Activated CD4-positive, alpha-beta T cell treated with anti-CD3 and anti-CD28 coated beads, Interleukin-2, amount 10 ng/mL, durations not matched to agents 24 days and 14 days (primary cell): ENCODE measurements at regions of chr6 and their contacts with region 1.

Region 1: DNA sequence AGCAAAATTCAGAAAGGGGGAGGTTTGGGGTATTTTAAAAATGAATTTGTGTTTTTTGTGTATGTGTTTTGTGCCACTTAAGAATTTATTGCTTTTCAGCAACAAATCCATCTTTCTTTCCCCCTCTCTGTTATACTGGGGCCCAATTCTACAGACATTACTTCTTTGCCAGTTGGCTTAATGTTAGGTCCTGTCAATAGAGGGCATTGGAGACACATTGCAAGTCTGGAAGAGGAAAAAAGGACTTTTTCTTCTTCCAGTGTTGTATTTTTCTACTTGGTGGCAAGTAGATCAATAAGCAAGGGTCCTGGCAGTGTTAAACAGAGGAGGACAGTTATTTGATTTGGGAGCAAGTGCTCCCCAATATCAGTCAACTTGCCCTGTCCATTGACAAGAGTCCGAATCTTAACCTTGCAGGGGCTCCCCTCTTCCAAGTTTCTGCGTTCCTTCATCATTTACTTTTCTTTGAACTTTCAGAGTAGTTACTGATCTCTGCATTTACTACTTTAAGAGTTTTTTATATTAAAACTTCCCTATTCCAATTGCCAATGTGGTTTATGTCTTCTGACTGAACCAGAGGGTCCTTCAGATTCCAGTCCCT is 23.4 kb downstream of the SCML4 start:
- DNase-seq: peak; percentile 64
- H3K4me3 Mint-ChIP-seq: no peak overlapping the region
- H3K27ac Mint-ChIP-seq: no peak overlapping the region
- H3K4me1 Mint-ChIP-seq: peaks cover 19% of the 10 kb centered on the region
- H3K27me3 Mint-ChIP-seq: peaks cover 7% of the 10 kb centered on the region

Region 2: GRCh38 chr6:107443608-107444267 is 356.9 kb before region 1 on chr6:
- intact Hi-C with region 1: no loop called
- DNase-seq: no peak
- H3K4me3 Mint-ChIP-seq: no peak overlapping the region
- H3K27ac Mint-ChIP-seq: no peak overlapping the region
- H3K4me1 Mint-ChIP-seq: peaks cover 2% of the 10 kb centered on the region
- H3K27me3 Mint-ChIP-seq: no peaks in the 10 kb centered on the region

Region 3: DNA sequence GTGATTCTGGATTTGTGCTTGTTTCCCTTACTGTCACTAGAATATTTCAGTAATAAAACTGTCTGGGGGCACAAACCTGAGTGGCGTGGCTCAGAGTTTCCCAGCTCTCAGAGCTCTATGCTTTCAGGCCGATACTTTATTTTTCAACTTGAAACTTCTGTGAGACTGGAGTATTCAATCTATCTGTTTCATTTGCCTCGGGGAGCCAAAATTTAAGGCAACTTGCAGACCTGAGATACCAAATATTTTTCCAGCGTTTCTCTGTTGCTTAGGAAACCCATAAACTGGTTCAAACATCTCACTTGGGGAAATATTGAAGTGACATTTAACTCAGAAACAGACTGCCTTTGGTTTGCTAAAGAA is 236.1 kb before region 1 on chr6:
- intact Hi-C with region 1: no loop called
- DNase-seq: no peak
- H3K4me3 Mint-ChIP-seq: no peak overlapping the region
- H3K27ac Mint-ChIP-seq: no peak overlapping the region
- H3K4me1 Mint-ChIP-seq: no peaks in the 10 kb centered on the region
- H3K27me3 Mint-ChIP-seq: peaks cover 18% of the 10 kb centered on the region

Region 4: DNA sequence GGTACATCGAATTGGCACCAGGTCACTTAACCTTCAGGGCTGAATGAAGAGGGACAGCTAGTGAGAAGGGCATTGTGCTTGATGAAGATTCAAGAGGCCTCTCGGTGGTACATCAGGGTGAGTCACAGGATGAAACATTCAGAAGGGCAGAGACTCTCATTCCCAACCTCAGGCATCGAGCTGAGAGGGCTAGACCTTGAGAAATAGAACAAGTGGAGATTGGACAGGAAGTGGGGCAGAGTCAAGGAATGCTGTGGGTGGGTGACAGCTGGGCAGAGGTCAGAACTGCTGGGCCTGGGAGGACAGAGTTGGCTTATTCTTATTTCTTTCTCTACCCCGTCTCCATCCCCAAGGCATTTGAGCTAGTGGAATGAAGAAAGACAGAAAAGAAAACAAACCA is 102.5 kb before region 1 on chr6:
- intact Hi-C with region 1: no loop called
- DNase-seq: no peak
- H3K4me3 Mint-ChIP-seq: no peak overlapping the region
- H3K27ac Mint-ChIP-seq: no peak overlapping the region
- H3K4me1 Mint-ChIP-seq: peaks cover 5% of the 10 kb centered on the region
- H3K27me3 Mint-ChIP-seq: peaks cover 6% of the 10 kb centered on the region

Region 5: DNA sequence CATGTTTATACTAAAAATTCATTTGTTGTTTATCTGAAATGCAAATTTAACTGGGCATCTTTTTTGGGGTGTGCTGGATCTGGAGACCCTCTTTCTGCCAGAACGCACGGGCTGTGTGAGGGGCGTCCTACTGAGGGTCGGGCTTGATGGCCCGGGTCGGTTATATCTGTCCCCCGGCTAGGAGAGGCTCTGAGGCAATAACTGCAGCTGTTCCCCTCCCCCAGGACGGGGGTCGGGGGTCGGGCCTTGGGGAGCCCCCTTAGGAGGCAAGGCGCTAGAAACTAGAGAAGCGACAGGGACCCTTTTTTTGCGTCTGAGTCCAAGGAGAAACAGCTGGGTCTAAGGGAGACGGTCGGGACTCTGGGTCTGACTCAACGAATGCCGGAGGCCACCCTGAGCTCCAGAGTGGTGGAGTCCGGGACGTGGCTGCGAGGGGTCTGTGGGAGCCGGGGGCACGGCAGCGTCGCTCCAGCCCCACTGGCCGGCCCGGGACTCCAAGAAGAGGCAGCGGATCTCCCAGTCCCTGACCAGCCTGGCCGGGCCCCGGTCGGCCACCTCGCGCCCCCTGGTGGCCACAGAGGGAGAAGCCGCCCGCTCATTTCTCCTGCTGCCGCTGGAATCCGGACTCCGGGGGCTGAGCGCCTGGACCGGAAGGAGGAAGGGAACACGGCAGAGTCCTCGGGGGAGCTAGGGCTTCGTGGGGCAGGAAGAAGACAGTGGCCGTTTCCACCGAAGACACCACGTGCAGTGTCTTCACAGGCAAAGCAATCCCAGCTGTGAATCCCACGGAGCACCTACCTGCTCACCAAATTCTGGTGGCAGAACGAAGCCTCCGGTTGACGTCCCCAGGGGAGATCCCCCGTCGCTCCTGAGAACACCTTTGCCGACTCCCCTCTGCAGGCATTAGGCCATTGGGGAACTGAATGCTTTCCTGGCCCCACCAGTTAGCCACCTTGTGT is 47.5 kb after region 1 on chr6:
- intact Hi-C with region 1: loop called (anchors 1 kb)
- DNase-seq: peak; percentile 95
- H3K4me3 Mint-ChIP-seq: peak overlapping the region; percentile 80
- H3K27ac Mint-ChIP-seq: peak overlapping the region; percentile 54
- H3K4me1 Mint-ChIP-seq: peaks cover 21% of the 10 kb centered on the region
- H3K27me3 Mint-ChIP-seq: peaks cover 6% of the 10 kb centered on the region